Posterior vena cava (tissue), 2 donors: ENCODE measurements at regions of chr6 and their contacts with region 1.

Region 1: DNA sequence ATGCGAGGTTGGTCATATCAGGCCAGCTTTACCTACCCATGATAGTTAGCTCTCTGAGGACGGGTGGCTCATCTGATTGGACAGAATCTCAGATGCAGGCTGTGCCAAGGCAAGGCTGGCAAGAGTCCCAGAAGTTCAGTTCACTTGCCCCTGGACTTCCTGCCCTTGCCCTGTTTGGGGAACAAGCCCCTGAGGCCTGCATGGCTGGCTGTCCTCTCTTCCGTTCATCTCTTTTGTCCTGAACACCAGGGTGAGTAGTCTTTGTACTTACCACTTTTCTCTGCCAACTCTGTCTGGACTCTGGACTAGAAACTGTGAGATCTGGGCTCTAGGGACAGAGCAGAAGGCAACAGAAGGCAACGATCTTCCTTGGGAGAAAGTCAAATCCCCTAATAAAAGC is 769.9 kb downstream of the QKI start:
- DNase-seq: no peak

Region 2: GRCh38 chr6:165478201-165478980 is 1294.0 kb after region 1 on chr6:
- intact Hi-C with region 1: loop called in 1 of 2 experiments (anchors 5 kb)
- DNase-seq: no peak